ENCODE measurements at regions of chr1 and their contacts with region 1.

Region 1: GRCh38 chr1:147242439-147243227 is at the start of gene CHD1L:
- DNase-seq: peak; percentile 76
- ATAC-seq: peak; percentile 96
- H3K4me3 ChIP-seq: peak within 1 kb of the TSS; percentile 83 to 92
- H3K27ac ChIP-seq: peak within 1 kb of the TSS; percentile 78
- H3K4me1 ChIP-seq: peaks cover 12% of the 10 kb centered on the region; the same call in 1 of the 2 replicates
- H3K27me3 ChIP-seq: no peaks in the 10 kb centered on the region
- CTCF ChIP-seq: peak; percentile 91
- total RNA-seq, gene CHD1L: 48.3 TPM

Region 2: DNA sequence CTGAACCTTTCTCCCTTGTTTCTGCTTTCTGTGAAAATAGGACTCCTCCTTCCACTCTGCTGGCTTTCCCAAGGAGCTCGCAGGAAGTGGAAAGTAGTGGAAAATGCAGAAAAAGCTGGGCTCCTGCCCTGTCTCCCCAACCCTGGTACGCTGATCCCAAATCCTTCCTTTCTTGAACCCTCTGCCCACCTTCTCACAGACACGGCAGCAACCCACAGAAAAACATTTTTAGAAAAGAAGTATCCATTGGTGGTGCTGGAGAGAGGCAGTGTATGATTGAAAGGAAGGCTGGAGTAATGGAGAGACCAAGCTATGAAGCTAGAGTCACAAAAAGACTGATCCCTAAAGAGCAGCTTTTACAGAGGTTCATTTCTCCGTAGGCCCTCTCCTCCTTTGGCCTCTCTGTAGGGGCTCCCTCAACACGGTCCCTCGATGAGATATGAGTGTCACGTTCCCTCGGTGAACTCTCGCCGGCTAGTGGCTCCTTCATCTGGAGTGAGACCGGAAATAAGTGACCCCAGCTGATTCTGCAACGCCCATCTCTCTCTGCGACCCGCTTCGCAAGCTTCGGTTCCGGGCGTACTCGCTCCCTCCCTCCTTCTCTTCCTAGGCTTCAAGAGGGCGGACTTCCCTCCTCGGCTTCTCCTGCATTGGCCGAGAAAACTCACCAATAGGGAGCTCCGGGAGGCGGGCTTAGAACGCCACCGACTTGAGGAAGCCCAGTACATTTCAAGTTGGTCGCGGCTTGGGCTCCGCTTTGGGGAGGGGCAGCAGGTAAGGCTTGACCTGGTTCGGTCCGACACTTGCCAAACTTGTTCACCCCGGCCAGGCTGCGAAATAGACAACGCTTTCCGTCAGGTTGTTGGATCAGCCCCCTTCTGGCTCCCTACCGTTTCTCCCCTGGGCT is 1278.4 kb before region 1 on chr1 and contains the starts of genes ANKRD34A and POLR3GL:
- CTCF ChIA-PET with region 1: no interaction called
- POLR2A ChIA-PET with region 1: no interaction called
- in situ Hi-C with region 1: no loop called
- intact Hi-C with region 1: no loop called
- DNase-seq: no peak
- ATAC-seq: peak; percentile 89
- H3K4me3 ChIP-seq: peak within 1 kb of the TSS; percentile 52 to 92
- H3K27ac ChIP-seq: peak within 1 kb of the TSS; percentile 93
- H3K4me1 ChIP-seq: peaks cover 24% of the 10 kb centered on the region
- H3K27me3 ChIP-seq: no peaks in the 10 kb centered on the region
- CTCF ChIP-seq: no peak
- total RNA-seq, gene ANKRD34A: 1.4 TPM
- total RNA-seq, gene POLR3GL: 14.9 TPM

Region 3: DNA sequence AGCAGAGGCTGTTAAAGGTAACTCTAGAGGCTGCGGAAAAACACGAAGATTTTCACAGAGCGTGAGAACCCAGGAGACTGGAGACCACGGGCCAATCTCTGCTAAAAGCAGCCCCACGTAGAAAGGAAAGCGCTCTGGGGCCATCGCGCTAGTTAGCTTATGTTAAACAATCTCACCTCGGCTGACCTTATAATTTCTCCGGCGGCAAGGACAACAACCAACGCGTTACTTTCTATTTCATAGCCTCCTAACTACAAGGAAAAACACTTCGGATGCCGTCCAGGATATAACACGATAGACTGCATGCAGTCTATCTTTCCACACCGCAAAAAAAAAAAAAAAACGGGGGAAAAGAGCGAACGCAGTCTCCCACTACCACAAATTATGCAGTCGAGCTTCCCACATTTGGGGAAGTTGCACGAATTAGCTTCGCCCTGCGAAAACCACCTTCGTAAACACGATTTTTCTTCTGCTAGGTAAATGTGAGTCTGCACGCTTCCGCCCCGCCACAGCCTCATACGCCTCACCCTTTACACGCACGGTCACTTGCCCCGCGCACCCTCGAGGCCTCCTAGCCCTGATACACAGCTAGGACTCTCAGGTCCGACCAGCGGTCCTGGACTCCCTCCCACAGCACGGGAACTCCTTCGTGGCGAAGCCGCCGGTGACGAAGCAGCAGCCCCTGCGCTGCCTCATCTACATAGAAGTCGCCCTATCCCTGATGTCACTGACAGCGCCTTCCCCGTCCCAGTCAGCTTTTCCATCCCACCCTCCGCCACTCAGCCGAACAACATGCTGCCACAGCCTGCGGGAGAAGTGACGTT is 158.1 kb before region 1 on chr1:
- CTCF ChIA-PET with region 1: no interaction called
- POLR2A ChIA-PET with region 1: no interaction called
- in situ Hi-C with region 1: no loop called
- intact Hi-C with region 1: loop called (anchors 2 kb)
- DNase-seq: peak; percentile 89
- ATAC-seq: peak; percentile 94
- H3K4me3 ChIP-seq: peak overlapping the region; percentile 73 to 96
- H3K27ac ChIP-seq: peak overlapping the region; percentile 92
- H3K4me1 ChIP-seq: no peaks in the 10 kb centered on the region
- H3K27me3 ChIP-seq: peaks cover 6% of the 10 kb centered on the region; the same call in 1 of the 2 replicates
- CTCF ChIP-seq: no peak

Region 4: DNA sequence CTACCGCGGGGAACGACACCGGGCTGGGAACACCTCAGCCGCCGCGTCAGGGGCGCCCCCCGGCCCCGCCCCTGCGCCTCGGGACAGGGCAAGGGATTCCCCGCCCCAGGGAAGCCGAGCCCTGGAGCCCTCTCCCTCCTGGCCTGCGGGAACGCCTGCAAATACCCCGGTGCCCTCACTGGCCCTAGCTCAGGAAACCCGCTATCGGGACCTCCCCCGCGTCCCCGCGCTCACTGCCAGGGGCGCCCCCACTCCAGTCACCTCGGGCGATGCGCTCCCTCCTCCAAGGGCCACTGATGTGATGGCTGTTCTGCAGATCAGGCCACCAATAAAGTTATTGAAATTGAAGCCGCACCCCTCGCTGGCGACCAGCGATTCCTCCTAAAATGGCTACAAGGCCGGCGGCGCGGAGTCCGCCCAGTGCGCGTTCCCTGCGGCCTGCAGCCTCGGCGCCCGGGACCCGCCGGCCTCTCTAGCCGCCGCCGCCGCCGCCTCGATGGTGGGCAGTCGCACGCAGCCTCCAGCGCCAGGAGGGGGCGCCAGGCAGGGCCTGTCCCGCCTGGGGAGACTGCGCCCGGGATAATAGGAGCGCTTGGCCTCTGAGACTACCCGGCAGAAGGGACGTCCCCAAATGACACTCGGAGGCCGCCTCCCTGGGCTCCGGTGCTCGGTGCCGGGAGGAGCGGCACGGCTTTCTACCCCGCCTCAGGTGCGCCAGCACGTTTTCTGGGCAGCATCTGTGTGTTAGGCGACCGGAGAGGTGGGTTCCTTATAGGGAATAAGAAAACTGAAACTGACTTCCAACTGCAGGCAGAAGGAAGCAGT is 70.3 kb before region 1 on chr1 and contains the start of gene PRKAB2:
- CTCF ChIA-PET with region 1: interaction called, 5 read pairs
- POLR2A ChIA-PET with region 1: no interaction called
- in situ Hi-C with region 1: no loop called
- intact Hi-C with region 1: loop called (anchors 1 kb)
- DNase-seq: peak; percentile 78
- ATAC-seq: peak; percentile 97
- H3K4me3 ChIP-seq: peak within 1 kb of the TSS; percentile 99 to 100
- H3K27ac ChIP-seq: peak within 1 kb of the TSS; percentile 96
- H3K4me1 ChIP-seq: peaks cover 14% of the 10 kb centered on the region
- H3K27me3 ChIP-seq: no peaks in the 10 kb centered on the region
- CTCF ChIP-seq: peak; percentile 98
- total RNA-seq, gene PRKAB2: 6.6 TPM

Measured in Panc1 (cell line).